ENCODE measurements at regions of chr1 and their contacts with region 1.

Region 1: DNA sequence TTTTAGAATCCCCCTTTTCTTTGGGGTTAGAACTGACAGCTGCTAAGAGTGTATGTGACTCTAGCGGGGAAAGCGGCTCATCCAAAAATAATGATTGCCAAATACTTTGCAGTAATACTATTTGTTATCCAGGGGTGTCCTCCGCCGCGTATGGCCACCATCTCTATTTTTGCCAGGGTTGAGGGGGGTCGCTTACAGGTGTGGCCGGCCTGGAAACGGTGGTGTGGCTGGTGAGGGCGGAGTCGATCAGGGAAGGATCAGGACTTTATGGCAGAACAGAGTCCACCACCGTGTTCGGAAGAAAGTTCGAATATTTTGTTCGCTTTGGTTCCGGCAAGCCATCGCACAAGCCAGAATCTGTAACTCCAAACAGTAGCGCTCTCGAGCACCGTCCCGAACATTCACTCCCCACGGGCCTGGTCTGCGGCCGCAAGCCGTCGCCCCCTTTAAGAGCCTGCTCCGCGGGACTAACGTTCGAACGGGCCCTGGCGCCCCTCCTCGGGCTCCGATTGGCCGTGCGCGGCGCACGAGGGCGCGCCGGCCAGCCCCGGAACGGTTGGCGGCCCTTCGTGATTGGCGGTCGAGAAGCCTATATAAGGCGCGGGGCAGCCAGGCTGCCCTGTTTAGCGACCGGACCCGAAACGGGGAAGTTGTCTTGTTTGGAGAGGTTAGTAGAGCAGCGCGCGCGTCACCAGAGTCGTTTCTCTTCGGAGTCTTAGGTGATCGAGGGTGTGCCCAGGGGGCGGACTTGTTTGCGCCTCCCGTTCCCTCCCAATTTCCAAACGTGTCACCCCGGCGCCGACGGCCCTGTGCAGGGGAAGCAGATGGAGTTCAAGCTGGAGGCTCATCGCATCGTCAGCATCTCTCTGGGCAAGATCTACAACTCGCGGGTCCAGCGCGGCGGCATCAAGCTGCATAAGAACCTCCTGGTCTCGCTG is at the start of gene IER5:
- DNase-seq: peak; percentile 98 to 99 (median 98)
- ATAC-seq: peak; percentile 89
- H3K4me3 ChIP-seq: peak within 1 kb of the TSS; percentile 84
- H3K27ac ChIP-seq: peak within 1 kb of the TSS; percentile 82
- H3K4me1 ChIP-seq: peaks cover 21 to 39% of the 10 kb centered on the region in 2 experiments
- H3K27me3 ChIP-seq: no peaks in the 10 kb centered on the region
- CTCF ChIP-seq: no peak; a peak in 1 of 6 replicates
- EP300 ChIP-seq: peak; percentile 67
- POLR2A ChIP-seq: peak; percentile 100
- RAD21 ChIP-seq: peak; percentile 28 to 29; a peak in 3 of 4 replicates
- polyA plus RNA-seq, gene IER5: 2.4 to 2.5 TPM

Region 2: GRCh38 chr1:180881806-180882509 is 206.4 kb before region 1 on chr1:
- CTCF ChIA-PET with region 1: no interaction called
- POLR2A ChIA-PET with region 1: interaction called, 5 read pairs
- in situ Hi-C with region 1: no loop called
- intact Hi-C with region 1: loop called (anchors 2 kb)
- DNase-seq: peak; percentile 52 to 76 (median 68)
- ATAC-seq: peak; percentile 97
- H3K4me3 ChIP-seq: no peak overlapping the region
- H3K27ac ChIP-seq: no peak overlapping the region
- H3K4me1 ChIP-seq: peaks cover 0 to 3% of the 10 kb centered on the region in 2 experiments; a peak in 1 of 5 replicates
- H3K27me3 ChIP-seq: no peaks in the 10 kb centered on the region
- CTCF ChIP-seq: peak; percentile 45 to 80 (median 67); a peak in 5 of 6 replicates
- EP300 ChIP-seq: no peak
- POLR2A ChIP-seq: no peak
- RAD21 ChIP-seq: peak; percentile 85 to 91

Region 3: DNA sequence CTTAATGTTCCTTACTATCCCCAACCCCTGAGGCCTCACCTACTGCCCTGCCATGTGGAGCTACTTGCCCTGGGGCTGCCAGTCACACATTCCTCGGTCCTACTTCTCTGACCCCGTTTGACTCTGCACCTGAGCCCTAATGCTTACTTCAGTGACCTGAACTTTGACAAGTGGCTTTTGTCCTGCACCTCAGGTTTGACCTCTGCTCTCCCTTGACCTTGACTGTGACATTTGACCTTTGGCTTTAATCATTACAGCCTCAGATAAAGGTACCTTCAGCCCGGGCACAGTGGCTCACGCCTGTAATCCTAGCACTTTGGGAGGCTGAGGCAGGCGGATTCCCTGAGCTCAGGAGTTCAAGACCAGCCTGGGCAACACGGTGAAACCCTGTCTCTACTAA is 31.8 kb before region 1 on chr1:
- CTCF ChIA-PET with region 1: no interaction called
- POLR2A ChIA-PET with region 1: interaction called, 13 read pairs
- in situ Hi-C with region 1: no loop called
- intact Hi-C with region 1: no loop called
- DNase-seq: no peak
- ATAC-seq: no peak
- H3K4me3 ChIP-seq: no peak overlapping the region
- H3K27ac ChIP-seq: no peak overlapping the region
- H3K4me1 ChIP-seq: no peaks in the 10 kb centered on the region
- H3K27me3 ChIP-seq: peaks cover 0 to 12% of the 10 kb centered on the region in 2 experiments; a peak in 1 of 5 replicates
- CTCF ChIP-seq: no peak
- EP300 ChIP-seq: no peak
- POLR2A ChIP-seq: no peak
- RAD21 ChIP-seq: no peak

Region 4: DNA sequence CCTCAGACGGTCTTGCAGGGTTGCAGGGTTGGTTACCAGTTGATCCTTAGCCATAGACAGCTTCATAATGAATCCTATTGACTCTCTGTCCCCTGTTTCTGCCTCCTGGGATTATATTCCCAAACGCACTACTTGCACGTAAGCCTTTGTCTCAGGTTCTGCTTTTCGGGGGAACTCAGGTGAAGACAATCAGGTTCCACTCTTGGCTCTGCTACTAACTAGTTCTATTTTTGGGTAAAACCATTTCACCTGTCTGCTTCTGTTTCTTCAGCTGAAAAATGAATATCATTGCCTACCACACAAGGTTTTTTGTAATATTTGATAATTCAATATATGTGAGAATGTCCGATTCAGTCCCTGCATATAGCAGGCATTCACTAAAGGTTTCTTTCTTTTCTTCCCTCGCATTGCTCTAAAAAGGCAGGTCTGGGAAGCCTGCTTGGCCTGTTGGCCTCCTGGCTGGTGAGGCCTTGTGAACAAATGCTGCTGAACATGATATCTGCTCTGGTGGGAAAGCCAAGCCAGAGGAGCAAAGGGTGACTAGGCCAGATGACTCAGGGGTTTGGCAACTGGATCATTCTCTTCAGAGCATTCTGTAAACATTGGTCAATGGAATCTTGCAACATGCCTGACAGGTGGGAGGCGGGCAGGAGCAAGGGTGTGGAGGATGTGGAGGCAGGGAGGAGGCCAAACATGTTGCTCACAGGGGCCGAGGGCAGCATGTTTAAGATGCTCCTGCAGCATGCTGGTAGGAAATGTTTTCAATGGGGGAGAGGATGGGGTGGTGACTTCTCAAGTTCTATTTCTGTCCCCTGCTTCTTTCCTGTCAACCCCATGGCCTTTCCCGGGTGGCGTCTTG is 24.0 kb after region 1 on chr1:
- CTCF ChIA-PET with region 1: no interaction called
- POLR2A ChIA-PET with region 1: interaction called, 257 read pairs
- in situ Hi-C with region 1: no loop called
- intact Hi-C with region 1: no loop called
- DNase-seq: peak; percentile 70 to 88 (median 77)
- ATAC-seq: peak; percentile 85
- H3K4me3 ChIP-seq: no peak overlapping the region
- H3K27ac ChIP-seq: peak overlapping the region; percentile 53; the same call in 2 of the 3 replicates
- H3K4me1 ChIP-seq: peaks cover 19 to 29% of the 10 kb centered on the region in 2 experiments
- H3K27me3 ChIP-seq: no peaks in the 10 kb centered on the region
- CTCF ChIP-seq: no peak
- EP300 ChIP-seq: peak; percentile 63
- POLR2A ChIP-seq: no peak
- RAD21 ChIP-seq: no peak; a peak in 1 of 4 replicates

Region 5: DNA sequence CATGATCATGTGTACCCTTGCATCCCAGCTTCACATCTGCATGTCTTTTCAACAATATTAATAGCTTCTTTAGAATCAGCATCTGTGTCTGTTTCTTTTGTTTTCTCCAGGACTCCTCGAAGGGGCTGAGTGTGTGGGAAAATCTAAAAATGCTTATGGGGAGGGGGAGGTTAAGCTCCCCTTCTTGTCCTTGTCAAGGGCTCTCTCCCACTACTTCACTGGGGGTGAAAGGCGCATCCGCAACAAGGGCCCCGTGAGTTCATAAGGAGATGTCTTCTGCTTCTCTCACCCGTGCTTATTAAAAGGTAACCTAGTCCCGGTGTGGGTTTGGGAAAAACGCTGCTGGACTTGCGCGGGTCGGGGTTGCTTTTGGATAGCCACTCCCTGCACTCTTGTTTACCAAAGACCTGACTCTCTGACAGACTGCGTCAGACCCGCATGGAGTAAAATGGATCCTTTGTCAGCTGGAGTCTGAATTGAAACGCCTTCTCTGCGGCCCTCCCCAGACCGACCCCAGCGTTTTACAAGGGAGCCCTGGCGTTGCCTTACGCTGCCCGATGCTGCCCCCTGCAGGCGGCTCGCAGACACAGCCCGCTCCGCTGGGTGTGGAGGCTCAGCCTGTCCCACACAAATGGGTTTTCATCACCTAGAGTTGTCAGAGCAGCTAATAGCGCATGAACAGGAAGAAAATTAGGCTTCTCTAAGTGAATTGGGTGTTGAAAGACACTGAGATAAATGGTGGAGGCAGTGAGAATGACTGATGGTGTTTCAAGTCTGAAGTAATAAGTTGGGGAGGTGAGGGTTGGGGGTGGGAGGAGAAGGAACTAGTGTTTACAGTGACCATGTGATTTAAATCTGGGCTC is 54.0 kb after region 1 on chr1:
- CTCF ChIA-PET with region 1: interaction called, 22 read pairs
- POLR2A ChIA-PET with region 1: interaction called, 52 read pairs
- in situ Hi-C with region 1: loop called (anchors 5 kb)
- intact Hi-C with region 1: loop called (anchors 1 kb)
- DNase-seq: peak; percentile 90 to 94 (median 94)
- ATAC-seq: peak; percentile 98
- H3K4me3 ChIP-seq: no peak overlapping the region
- H3K27ac ChIP-seq: peak overlapping the region; percentile 36; the same call in 1 of the 3 replicates
- H3K4me1 ChIP-seq: peaks cover 20 to 28% of the 10 kb centered on the region in 2 experiments
- H3K27me3 ChIP-seq: no peaks in the 10 kb centered on the region
- CTCF ChIP-seq: peak; percentile 98 to 100 (median 99)
- EP300 ChIP-seq: peak; percentile 46; the same call in 1 of the 2 replicates
- POLR2A ChIP-seq: no peak
- RAD21 ChIP-seq: peak; percentile 100

Region 6: DNA sequence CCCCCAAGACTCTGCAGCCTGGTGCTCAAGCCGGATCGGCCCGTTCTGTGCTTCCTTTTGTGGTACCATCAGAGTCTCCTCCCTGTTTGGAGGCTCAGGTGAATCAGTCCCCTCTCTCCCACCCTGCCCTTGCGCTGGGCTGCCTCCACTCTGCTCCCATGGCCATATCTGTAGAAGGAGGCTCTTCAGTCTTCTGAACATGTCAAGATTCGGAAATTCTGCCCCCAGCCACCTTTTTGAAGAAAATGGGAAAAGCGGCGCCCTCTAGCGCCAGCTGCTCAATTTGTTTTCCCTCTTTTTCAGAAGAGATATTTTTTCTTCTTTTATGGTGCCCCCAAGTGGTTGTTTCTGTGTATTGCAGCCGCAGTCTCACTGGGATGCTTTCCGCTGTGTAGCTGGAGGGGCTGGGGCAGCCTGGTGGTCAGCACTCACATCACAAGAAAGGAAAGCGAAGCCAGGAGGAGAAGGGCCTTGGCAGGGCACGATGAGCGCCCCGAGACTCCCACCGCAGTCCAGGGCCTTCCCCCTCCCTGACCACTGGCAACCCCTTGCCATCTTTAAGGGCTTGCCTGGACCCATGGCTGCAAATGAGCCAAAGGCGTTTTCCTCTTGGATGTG is 336.5 kb after region 1 on chr1:
- CTCF ChIA-PET with region 1: interaction called, 3 read pairs
- POLR2A ChIA-PET with region 1: no interaction called
- in situ Hi-C with region 1: no loop called
- intact Hi-C with region 1: loop called (anchors 10 kb)
- DNase-seq: peak; percentile 78 to 87 (median 82)
- ATAC-seq: peak; percentile 92
- H3K4me3 ChIP-seq: no peak overlapping the region
- H3K27ac ChIP-seq: no peak overlapping the region
- H3K4me1 ChIP-seq: no peaks in the 10 kb centered on the region
- H3K27me3 ChIP-seq: peaks cover 3 to 8% of the 10 kb centered on the region in 2 experiments; a peak in 4 of 5 replicates
- CTCF ChIP-seq: peak; percentile 99 to 100 (median 100)
- EP300 ChIP-seq: no peak
- POLR2A ChIP-seq: no peak
- RAD21 ChIP-seq: peak; percentile 85 to 92